Right lobe of liver (tissue), 6 donors: ENCODE measurements at regions of chr1 and their contacts with region 1.

Region 1: GRCh38 chr1:18505666-18506065 is 24.9 kb downstream of the KLHDC7A start:
- DNase-seq: peak in 1 of 3 donors; percentile 15
- ATAC-seq: no peak
- H3K4me3 ChIP-seq: no peak overlapping the region
- H3K27ac ChIP-seq: no peak overlapping the region
- H3K4me1 ChIP-seq: no peaks in the 10 kb centered on the region
- H3K27me3 ChIP-seq: no peaks in the 10 kb centered on the region
- CTCF ChIP-seq: no peak
- POLR2A ChIP-seq: no peak

Region 2: DNA sequence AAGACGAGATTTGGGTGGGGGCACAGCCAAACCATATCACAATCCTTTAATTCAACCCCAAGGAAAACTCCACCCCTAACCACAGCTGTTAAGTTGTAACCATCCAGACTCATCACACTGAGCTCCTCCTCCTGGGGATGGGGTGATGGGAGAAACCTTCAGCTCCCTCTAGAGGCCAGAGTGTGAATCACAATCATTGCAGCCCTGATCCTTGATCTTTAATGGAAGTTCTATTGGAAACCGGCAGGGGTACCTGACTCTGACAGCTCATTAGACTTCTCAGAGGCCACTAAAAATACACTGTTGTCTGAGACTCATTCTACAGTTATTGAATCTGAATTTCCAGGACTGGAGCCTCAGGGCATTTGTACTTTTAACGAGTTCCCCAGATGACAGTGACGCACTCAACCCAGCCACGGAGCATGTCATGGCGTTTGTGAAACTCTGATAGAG is 270.9 kb before region 1 on chr1:
- intact Hi-C with region 1: no loop called
- DNase-seq: no peak
- ATAC-seq: peak; percentile 77 to 88 (median 81)
- H3K4me3 ChIP-seq: no peak overlapping the region
- H3K27ac ChIP-seq: no peak overlapping the region
- H3K4me1 ChIP-seq: no peaks in the 10 kb centered on the region
- H3K27me3 ChIP-seq: no peaks in the 10 kb centered on the region
- CTCF ChIP-seq: peak; percentile 59 to 74 (median 65)
- POLR2A ChIP-seq: no peak

Region 3: DNA sequence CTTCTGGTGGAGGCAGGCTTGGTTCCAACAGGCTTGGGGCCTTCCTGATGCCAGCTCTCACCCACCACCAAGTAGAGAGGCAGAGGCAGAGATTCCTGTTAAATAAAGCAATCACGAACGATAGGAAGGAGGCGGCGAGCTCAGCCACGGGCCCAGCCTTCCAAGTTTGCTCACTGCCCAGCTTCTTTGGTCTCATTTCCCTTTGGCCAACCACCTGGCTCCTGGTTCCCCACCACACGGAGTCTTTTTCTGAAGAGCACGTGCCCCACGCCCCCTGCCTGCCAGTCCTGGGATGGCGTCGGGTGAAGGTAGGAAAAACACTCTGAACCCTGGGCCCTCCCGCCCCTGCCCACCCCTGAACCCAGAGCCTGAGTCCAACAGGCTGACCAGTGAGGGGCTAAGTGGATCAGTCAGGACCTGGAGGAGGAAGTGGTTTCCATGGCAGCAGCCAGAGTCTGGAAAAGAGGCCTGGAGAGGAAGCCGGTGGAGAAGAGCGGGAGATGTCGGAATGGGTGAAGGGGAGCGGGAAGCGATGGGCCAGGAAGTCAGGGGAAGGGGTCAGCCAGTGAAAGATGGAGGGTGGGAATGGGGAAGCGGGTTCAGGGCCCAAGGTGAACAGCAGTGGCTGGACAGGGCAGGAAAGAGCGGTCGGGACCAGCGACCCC is 183.2 kb before region 1 on chr1:
- intact Hi-C with region 1: loop called in 1 of 2 experiments (anchors 10 kb)
- DNase-seq: no peak
- ATAC-seq: no peak
- H3K4me3 ChIP-seq: no peak overlapping the region
- H3K27ac ChIP-seq: no peak overlapping the region
- H3K4me1 ChIP-seq: no peaks in the 10 kb centered on the region
- H3K27me3 ChIP-seq: no peaks in the 10 kb centered on the region
- CTCF ChIP-seq: peak in 3 of 4 donors; percentile 13 to 27 (median 21)
- POLR2A ChIP-seq: no peak

Region 4: DNA sequence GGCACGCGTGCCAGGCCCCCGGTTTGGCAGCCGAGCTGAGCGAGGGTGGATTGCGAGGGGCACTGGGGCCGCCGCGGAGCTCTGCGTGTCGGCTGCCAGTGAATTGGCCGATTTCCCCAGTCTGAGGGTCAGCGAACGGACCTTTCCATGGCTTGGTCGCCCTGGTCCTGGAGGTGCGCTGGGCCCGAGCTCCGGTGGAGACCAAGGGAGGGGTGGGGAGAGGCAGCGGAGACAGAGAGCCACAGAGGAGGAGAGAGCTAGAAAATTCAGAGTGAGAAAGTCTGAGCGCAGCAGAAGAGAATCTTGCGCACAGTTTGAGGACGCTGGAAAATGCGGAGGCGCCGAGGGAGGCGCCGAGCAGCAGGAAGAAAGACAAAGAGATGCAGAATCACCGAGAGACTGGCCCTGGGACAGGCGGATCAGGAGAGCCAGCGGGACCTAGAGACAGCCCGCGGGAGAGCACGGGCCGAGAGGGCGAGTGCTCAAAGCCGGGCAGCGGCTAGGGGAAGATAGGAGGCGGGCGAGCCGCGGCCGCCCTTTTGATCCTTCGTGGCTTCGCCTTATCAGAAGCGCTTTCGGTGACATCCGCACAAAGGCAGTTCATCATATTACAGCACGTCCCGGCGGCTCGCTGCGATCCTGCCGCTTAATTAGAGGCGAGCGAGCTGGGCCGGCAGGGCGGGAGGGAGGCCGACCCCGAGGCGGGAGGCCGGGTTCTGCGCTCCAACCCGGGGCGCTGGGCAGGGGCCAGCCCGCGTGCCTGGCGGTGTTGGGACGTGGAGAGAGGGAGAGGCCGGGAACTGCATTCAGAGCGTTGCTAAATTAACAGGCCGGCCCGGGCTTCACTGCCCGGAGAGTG is 137.7 kb after region 1 on chr1:
- intact Hi-C with region 1: no loop called
- DNase-seq: no peak
- ATAC-seq: peak in 1 of 4 donors; percentile 35
- H3K4me3 ChIP-seq: no peak overlapping the region
- H3K27ac ChIP-seq: no peak overlapping the region
- H3K4me1 ChIP-seq: no peaks in the 10 kb centered on the region
- H3K27me3 ChIP-seq: peaks cover 0 to 29% of the 10 kb centered on the region in 2 donors
- CTCF ChIP-seq: no peak
- POLR2A ChIP-seq: no peak